Heart right ventricle (tissue), 16 donors: ENCODE measurements at regions of chr2 and their contacts with region 1.

Region 1: GRCh38 chr2:61538200-61538919 is at the start of gene XPO1:
- DNase-seq: peak; percentile 99 to 100
- ATAC-seq: peak; percentile 93 to 98 (median 95)
- H3K4me3 ChIP-seq: peak within 1 kb of the TSS; percentile 58 to 81 (median 72)
- H3K27ac ChIP-seq: peak within 1 kb of the TSS; percentile 85 to 99 (median 94)
- H3K4me1 ChIP-seq: peaks cover 0 to 36% (median 32%) of the 10 kb centered on the region in 9 donors
- H3K27me3 ChIP-seq: no peaks in the 10 kb centered on the region
- CTCF ChIP-seq: peak in 1 of 9 donors; percentile 6
- total RNA-seq, gene XPO1: 50.0 to 77.3 (median 67.9) TPM

Region 2: DNA sequence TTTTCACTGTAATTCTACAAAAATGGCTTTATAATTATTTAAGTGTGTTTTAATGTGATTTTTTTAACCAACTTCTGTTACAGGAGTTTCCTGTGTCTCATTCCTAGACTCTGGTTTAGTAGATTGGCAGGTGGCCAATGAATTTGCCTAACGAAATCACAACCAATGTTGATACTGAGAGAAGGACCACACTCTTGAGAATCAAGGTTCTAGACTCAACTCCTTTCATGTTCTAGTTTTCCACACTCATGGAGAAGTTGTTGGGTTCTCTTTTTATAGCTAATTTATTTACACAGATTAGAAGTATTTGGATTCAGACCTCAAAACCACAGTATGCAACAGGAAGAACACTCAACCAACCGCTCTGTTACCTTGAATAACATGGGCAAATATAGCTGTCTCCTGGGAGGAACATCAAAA is 44.8 kb before region 1 on chr2:
- intact Hi-C with region 1: no loop called
- DNase-seq: no peak
- ATAC-seq: no peak
- H3K4me3 ChIP-seq: no peak overlapping the region
- H3K27ac ChIP-seq: no peak overlapping the region
- H3K4me1 ChIP-seq: peaks cover 0 to 9% (median 0%) of the 10 kb centered on the region in 9 donors
- H3K27me3 ChIP-seq: no peaks in the 10 kb centered on the region
- CTCF ChIP-seq: no peak

Region 3: DNA sequence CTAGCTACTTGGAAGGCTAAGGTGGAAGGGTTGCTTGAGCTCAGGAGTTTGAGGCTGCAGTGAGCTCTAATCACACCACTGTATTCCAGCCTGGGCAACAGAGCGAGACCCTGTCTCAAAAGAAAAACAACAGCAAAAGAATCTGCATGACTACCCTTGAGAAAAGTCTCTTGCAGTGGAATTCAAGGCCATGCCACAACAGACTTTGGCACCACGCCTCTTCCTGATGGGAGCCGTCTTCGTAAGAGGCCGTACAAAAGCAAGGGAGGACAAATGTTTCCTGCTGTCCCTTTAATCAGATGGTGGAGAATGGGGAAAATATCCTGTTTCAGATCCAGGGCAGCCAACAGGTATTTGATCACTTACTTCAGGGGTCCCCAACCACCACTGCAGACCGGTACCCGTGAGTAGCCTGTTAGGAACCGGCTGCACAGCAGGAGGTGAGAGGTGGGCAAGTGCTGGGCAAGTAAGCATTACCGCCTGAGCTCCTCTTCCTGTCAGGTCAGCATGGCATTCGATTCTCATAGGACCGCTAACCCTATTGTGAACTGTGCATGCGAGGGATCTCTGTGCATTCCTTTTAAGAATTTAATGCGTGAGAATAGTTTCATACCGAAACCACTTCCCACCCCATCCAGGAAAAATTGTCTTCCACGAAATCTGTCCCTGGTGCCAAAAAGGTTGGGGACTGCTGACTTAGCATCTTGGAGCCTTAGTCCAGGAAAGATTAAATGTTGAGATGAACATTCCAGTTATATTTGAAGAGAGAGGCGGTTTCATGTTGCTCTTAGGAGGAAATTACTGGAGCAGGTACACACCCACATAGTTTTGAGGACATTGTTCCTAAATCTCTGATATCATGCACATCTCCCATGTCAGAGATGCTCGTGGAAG is 94.2 kb after region 1 on chr2:
- intact Hi-C with region 1: loop called in 1 of 10 experiments (anchors 10 kb)
- DNase-seq: no peak
- ATAC-seq: no peak
- H3K4me3 ChIP-seq: peak overlapping the region in 3 of 10 donors; percentile 5 to 15 (median 8)
- H3K27ac ChIP-seq: no peak overlapping the region
- H3K4me1 ChIP-seq: peaks cover 0 to 7% (median 0%) of the 10 kb centered on the region in 9 donors
- H3K27me3 ChIP-seq: no peaks in the 10 kb centered on the region
- CTCF ChIP-seq: no peak

Region 4: DNA sequence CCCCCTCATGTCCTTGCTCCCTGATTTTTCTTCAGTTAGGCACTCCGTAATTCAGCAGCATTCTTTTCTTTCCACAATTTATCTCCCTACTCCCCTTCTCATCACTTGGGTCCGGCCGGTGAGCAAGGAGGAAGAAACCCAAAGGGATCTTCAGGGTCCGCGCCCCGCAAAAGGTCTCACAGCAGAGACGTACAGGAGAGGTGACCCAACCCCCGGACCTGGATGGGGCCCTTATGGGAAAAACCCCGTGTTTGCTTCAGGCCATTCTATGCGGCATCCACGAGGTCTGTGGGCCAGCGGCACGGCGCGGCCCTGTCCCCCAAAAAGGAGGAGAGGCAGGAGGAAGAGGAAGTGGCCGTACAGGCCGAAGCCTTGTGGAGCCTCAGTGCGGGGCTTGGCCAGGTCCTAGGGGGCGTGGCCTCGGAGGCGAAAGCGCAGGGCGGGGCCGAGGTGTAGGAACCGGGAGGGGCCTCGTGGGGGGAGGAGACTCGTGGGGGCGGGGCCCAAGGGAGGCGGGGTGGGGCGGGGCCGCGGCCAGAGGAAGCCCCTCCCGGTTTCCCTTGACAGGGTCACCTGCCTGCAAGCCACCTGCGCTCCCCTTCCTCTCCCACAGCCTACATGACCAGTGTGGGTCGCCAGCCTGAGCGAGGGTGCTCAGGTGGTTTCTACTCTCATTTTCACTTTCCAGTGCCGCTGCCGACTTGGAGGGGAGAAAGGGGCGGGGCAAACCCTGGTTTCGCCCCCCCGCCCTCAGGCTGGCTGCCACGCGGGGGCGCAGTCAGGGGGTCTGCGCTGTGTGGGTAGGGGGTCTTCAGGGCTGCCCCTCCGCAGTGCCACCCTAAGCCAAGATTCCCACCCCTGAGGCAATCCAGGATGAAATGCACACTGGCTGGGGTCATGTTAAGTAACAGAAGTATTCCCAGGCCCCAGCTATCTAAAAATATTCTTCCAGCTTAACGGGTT is 156.2 kb after region 1 on chr2:
- intact Hi-C with region 1: loop called in 3 of 10 experiments (anchors 10 kb)
- DNase-seq: peak; percentile 94 to 97
- ATAC-seq: peak; percentile 100
- H3K4me3 ChIP-seq: peak overlapping the region; percentile 49 to 90 (median 78)
- H3K27ac ChIP-seq: peak overlapping the region; percentile 57 to 88 (median 86)
- H3K4me1 ChIP-seq: peaks cover 0 to 15% (median 5%) of the 10 kb centered on the region in 9 donors
- H3K27me3 ChIP-seq: no peaks in the 10 kb centered on the region
- CTCF ChIP-seq: peak; percentile 14 to 74 (median 55)

Region 5: DNA sequence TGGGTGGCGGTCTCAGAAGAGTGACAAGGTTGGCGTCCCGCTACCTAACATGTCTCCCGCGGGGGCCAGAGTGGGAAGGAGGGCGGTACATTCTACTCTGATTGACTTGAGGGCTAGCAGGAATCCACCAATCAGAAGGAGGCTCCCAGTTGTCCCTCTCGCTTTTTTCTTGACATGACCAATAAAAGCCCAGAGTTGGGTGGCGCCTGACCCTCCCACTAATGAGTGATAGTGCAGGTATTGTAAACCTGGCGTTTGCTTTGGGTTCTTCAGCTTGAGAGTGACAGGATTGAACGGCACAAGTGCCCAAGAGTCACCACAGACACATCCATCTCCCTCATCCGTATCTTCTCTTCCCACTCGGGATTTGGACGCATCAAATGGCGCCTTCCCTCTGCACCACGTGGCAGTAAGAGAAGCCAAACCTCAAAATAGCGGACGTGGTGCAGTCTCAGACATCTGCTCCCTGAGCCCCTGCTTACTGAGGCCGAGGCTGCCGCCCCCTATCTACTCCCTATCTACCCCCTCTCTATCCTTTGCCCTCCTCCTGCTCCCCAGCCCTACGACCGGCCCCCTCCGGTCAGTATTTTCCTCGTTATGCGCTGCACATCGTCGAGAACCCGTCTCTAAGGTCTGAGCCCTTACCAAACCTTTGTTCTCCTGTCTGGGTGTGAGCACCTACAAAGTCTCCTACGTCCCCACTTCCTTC is 316.3 kb after region 1 on chr2:
- intact Hi-C with region 1: loop called in 3 of 10 experiments (anchors 5 to 10 kb)
- DNase-seq: peak; percentile 75 to 91
- ATAC-seq: peak; percentile 94 to 97 (median 95)
- H3K4me3 ChIP-seq: peak overlapping the region; percentile 58 to 94 (median 84)
- H3K27ac ChIP-seq: peak overlapping the region in 9 of 10 donors; percentile 40 to 88 (median 80)
- H3K4me1 ChIP-seq: peaks cover 5 to 16% (median 11%) of the 10 kb centered on the region in 9 donors
- H3K27me3 ChIP-seq: no peaks in the 10 kb centered on the region
- CTCF ChIP-seq: peak in 1 of 9 donors; percentile 9